Common myeloid progenitor, CD34-positive (primary cell): ENCODE measurements at regions of chr12 and their contacts with region 1.

Region 1: DNA sequence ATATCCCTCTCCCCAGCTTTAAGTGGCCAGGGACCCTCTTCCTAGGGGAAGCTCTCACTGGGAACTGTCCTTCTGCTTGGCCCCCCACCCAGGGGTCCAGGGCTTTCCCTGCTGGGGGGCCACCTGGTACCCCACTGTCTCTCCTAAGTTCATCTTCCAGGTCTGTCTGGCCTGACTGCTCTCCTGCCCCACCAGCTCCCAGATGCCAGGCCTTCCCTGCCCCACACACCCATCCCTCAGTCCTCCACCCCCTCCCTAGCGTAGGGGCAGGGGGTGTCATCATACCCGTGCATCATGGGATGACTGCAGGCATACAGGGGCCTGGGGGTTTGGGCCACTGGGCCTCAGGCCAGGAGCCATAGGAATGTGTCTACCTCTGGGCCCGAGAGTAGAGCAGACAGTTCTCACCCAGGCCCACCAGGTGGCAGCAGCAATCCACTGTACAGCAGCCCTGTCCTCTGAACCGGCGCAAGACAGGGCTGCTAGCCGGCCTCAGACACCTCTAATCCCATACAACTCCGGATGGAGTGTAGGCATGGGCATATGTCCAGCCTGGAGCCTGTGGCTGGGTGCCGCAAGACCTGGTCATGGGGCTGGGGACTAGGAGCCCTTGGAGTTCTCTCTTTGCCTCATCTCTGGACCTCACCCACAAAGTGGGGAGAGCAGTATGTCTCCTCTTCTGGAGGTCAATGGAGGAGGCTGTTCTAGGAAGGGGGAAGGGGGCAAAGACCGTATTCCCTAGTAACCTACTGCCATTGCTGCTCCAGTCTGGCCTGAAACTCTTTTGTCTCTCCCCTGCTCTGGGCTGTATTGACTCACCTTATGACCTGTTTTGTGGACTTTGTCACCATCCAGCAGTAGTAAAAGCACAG is 10.0 kb upstream of the SMARCD1 start:
- DNase-seq: peak; percentile 71 to 79 (median 72)
- H3K4me3 ChIP-seq: no peak overlapping the region
- H3K27ac ChIP-seq: no peak overlapping the region
- H3K4me1 ChIP-seq: peaks cover 0 to 19% (median 0%) of the 10 kb centered on the region in 4 experiments
- H3K27me3 ChIP-seq: peaks cover 0 to 6% (median 3%) of the 10 kb centered on the region in 5 experiments

Region 2: DNA sequence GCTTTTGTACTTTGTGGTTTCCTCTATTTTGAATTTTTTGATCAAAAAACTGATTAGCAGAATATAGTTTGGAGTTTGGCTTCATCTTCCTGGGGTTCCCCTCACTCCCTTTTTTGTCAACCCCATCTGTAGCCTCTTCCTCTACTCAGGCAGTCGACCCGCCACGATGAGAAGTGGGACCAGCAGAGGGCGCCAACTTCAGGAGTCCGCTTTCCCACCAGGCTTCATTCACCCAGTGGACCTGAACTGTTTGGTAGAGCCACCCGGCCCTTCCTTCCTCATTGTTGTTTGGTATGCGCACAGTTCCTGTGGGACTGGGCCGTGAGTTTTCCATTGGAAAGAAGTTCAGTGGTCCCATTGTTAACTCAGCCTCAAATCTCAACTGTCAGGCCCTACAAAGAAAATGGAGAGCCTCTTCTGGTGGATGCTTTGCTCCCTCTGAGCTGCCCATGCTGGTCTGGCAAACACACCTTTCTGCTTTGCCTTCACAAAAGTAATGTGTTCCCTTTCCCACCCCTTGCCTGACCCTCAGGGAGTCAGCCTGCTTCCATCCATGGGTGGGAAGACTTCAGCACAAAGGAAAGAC is 312.1 kb before region 1 on chr12:
- CTCF ChIA-PET with region 1: no interaction called
- POLR2A ChIA-PET with region 1: no interaction called
- DNase-seq: peak; percentile 77 to 89 (median 85)
- H3K4me3 ChIP-seq: peak overlapping the region in 2 of 7 experiments; percentile 19 to 31
- H3K27ac ChIP-seq: peak overlapping the region in 1 of 2 experiments; percentile 36
- H3K4me1 ChIP-seq: peaks cover 23 to 36% (median 30%) of the 10 kb centered on the region in 4 experiments
- H3K27me3 ChIP-seq: no peaks in the 10 kb centered on the region

Region 3: GRCh38 chr12:49866859-49867579 is 208.2 kb before region 1 on chr12:
- CTCF ChIA-PET with region 1: interaction called, 20 read pairs
- POLR2A ChIA-PET with region 1: no interaction called
- DNase-seq: peak; percentile 46 to 72 (median 67)
- H3K4me3 ChIP-seq: no peak overlapping the region
- H3K27ac ChIP-seq: no peak overlapping the region
- H3K4me1 ChIP-seq: peaks cover 0 to 32% (median 19%) of the 10 kb centered on the region in 4 experiments
- H3K27me3 ChIP-seq: peaks cover 0 to 12% (median 4%) of the 10 kb centered on the region in 5 experiments

Region 4: DNA sequence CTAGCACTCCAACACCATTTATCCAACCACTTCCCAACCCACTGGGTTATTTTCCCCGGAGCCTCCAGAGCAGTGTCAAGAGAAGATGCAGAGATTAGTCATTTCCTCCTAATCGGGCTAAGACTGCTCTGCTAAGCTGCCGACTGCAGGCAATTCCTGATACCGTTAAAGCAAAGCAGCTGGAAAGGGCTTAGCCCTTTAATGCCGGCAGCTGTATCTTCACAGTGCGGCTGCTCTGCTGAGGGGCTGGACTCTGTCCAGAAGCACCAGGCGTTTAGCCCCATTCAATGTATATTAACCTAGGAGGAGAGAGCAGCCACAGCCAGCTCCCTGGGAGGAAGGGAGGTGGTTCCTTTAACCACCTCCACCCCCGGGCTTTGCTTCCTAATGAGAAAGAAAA is 91.3 kb before region 1 on chr12:
- CTCF ChIA-PET with region 1: interaction called, 13 read pairs
- POLR2A ChIA-PET with region 1: no interaction called
- DNase-seq: peak; percentile 25 to 60 (median 51)
- H3K4me3 ChIP-seq: no peak overlapping the region
- H3K27ac ChIP-seq: no peak overlapping the region
- H3K4me1 ChIP-seq: peaks cover 0 to 29% (median 22%) of the 10 kb centered on the region in 4 experiments
- H3K27me3 ChIP-seq: no peaks in the 10 kb centered on the region

Region 5: DNA sequence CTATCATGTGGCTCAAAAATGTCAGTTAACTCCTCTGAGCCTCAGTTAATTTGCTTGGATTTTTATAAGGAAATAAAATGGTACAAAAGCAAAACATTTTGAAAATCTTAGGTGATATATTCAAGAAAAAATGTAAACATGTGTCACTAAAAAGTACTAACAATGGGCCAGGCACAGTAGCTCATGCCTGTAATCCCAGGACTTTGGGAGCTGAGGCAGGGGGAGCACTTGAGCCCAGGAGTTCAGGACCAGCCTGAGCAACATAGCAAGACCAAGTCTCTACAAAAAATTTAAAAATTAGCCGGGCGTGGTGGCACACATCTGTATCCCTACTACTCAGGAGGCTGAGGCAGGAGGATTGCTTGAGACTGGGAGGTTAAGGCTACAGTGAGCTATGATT is 76.7 kb before region 1 on chr12:
- CTCF ChIA-PET with region 1: no interaction called
- POLR2A ChIA-PET with region 1: no interaction called
- DNase-seq: no peak
- H3K4me3 ChIP-seq: no peak overlapping the region
- H3K27ac ChIP-seq: no peak overlapping the region
- H3K4me1 ChIP-seq: no peaks in the 10 kb centered on the region
- H3K27me3 ChIP-seq: no peaks in the 10 kb centered on the region

Region 6: DNA sequence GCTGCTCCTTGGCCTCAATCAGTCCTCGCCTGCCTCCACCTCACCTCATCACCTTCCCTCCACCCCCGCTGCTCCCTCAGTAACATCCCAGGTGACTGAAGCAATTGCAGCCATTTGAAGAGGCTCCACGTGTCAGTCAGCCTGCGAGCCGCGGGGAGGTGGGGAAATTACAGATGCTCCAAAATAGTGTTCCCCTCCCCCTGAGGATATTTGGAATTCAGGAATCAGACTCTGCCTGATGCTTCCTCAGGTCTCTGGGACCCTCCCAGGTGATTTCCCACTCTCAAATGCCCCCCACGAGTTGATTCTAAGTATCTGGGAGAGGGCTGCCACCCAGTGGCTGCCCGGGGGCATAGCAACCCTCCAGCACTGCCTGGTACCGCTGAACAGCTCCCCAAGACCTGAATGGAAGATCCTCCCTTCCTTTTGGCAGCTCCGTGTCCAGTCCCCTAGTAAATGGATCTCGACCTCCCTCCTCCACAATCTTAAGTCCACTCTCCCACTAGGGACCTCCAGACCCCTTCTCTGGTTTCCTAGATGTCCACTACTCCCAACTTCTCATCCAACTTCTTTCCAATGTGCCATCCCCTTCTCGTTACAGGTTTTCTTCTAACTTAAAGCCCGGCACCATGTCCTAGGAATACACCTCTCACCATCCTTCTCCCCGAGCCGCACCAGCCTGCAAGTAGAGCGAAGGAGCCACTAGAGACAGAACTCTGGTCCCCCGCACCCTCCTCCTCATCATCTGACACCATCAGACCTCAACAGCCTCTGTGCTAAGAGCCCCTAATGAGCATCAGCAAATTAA is 19.1 kb before region 1 on chr12:
- CTCF ChIA-PET with region 1: interaction called, 51 read pairs
- POLR2A ChIA-PET with region 1: no interaction called
- DNase-seq: peak; percentile 53 to 75 (median 67)
- H3K4me3 ChIP-seq: peak overlapping the region in 1 of 7 experiments; percentile 55
- H3K27ac ChIP-seq: no peak overlapping the region
- H3K4me1 ChIP-seq: peaks cover 2 to 52% (median 45%) of the 10 kb centered on the region in 4 experiments
- H3K27me3 ChIP-seq: peaks cover 0 to 28% (median 25%) of the 10 kb centered on the region in 5 experiments

Region 7: DNA sequence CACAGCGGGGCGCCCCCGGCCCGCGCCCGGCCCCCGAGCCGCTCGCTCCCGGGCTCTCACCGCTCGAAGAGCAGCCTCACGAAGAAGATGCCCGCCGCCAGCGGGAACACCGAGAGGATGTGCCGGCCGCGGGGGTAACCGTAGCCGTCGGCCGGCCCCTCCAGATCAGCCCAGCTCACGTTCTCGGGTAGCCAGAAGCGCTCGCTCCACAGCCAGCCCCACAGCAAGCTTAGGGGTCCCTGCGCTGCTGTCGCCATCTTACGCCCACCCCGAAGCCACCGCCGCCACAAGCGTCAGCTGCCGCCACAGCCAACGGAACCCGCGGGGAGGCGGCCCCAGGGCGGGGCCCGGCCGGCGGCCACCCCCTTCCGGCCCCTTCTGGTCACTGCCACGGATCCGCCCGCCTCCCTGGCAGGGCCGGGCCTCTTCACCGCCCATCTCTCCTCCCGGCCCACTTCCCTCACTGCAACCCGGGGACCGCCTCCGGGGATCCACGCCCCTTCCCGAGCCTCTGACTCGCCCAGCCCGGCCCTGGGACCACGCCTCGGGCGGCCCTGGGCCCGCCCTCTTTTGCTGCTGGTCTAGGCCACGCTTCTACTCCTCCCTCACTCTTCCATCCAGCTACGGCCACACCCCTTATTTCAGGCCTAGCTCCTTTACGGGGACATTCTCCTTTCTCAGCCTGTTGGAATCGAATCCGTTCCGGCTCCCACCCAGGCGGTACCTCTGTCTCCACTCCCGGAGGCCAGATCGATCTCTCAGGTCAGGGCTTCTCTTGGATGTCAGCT is 92.1 kb after region 1 on chr12 and contains the start of gene CERS5:
- CTCF ChIA-PET with region 1: interaction called, 10 read pairs
- POLR2A ChIA-PET with region 1: no interaction called
- DNase-seq: peak; percentile 97 to 99 (median 99)
- H3K4me3 ChIP-seq: peak within 1 kb of the TSS; percentile 76 to 100 (median 93)
- H3K27ac ChIP-seq: peak within 1 kb of the TSS; percentile 81 to 92
- H3K4me1 ChIP-seq: peaks cover 7 to 19% (median 14%) of the 10 kb centered on the region in 4 experiments
- H3K27me3 ChIP-seq: no peaks in the 10 kb centered on the region

Region 8: GRCh38 chr12:50314629-50315312 is 239.6 kb after region 1 on chr12:
- CTCF ChIA-PET with region 1: interaction called, 12 read pairs
- POLR2A ChIA-PET with region 1: no interaction called
- DNase-seq: peak; percentile 54 to 70 (median 64)
- H3K4me3 ChIP-seq: no peak overlapping the region
- H3K27ac ChIP-seq: no peak overlapping the region
- H3K4me1 ChIP-seq: no peaks in the 10 kb centered on the region
- H3K27me3 ChIP-seq: no peaks in the 10 kb centered on the region